ENCODE measurements at regions of chr4 and their contacts with region 1.

Region 1: DNA sequence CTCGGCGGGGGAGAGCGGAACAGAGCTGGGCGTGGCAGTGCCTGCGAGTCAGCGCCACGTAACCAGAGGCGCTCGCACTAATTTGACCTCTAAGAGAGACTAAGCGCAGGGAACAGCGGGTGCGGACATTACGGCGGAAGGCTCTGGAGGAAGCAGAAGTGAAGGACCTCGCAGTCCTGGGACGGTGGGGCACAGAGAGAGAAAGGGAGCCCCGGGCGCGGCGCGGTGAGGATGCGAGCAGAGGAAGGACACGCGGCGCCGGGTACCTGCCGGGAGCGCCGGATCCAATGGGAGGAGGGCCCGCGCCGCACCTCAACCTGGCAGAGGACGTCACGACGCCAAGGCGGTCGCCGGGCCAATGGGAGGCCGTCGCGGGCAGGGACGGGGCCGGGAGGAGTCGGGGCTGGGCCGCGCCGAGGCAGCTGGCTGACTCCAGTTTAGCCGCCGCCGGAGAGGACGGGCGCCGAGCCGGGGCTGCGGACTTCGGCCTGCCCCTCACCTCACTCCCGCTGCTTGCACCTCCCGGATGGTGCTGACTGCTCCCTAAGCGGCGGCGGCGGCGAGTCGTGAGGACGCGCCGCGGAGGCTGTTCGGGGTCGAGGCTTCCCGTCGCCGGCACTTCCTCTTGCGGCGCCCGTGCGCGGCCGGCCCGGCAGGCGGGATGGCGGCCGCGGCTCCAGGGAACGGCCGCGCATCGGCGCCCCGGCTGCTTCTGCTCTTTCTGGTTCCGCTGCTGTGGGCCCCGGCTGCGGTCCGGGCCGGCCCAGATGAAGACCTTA is at the start of gene TMEM165:
- DNase-seq: peak; percentile 51 to 94
- H3K4me3 ChIP-seq: peak within 1 kb of the TSS; percentile 74 to 87 (median 79)
- H3K27ac ChIP-seq: peak within 1 kb of the TSS; percentile 91
- H3K4me1 ChIP-seq: peaks cover 0 to 6% (median under 1%) of the 10 kb centered on the region in 4 experiments; a peak in 2 of 7 replicates
- H3K27me3 ChIP-seq: no peaks in the 10 kb centered on the region
- CTCF ChIP-seq: no peak
- EP300 ChIP-seq: no peak; a peak in 1 of 3 replicates
- POLR2A ChIP-seq: peak; percentile 90 to 99
- RAD21 ChIP-seq: no peak
- total RNA-seq, gene TMEM165: 77.7 and 85.5 TPM in 2 replicates

Region 2: GRCh38 chr4:55363691-55364351 is 31.9 kb before region 1 on chr4:
- CTCF ChIA-PET with region 1: interaction called, 4 read pairs
- POLR2A ChIA-PET with region 1: interaction called, 15 read pairs
- DNase-seq: no peak
- H3K4me3 ChIP-seq: no peak overlapping the region
- H3K27ac ChIP-seq: no peak overlapping the region
- H3K4me1 ChIP-seq: peaks cover 6 to 20% (median 11%) of the 10 kb centered on the region in 4 experiments; a peak in 6 of 7 replicates
- H3K27me3 ChIP-seq: no peaks in the 10 kb centered on the region
- CTCF ChIP-seq: no peak
- EP300 ChIP-seq: no peak
- POLR2A ChIP-seq: no peak
- RAD21 ChIP-seq: no peak

Region 3: GRCh38 chr4:55378617-55379463 is 16.9 kb before region 1 on chr4:
- CTCF ChIA-PET with region 1: no interaction called
- POLR2A ChIA-PET with region 1: interaction called, 16 read pairs
- DNase-seq: no peak
- H3K4me3 ChIP-seq: no peak overlapping the region
- H3K27ac ChIP-seq: no peak overlapping the region
- H3K4me1 ChIP-seq: no peaks in the 10 kb centered on the region
- H3K27me3 ChIP-seq: no peaks in the 10 kb centered on the region
- CTCF ChIP-seq: no peak
- EP300 ChIP-seq: no peak
- POLR2A ChIP-seq: no peak
- RAD21 ChIP-seq: no peak

Region 4: DNA sequence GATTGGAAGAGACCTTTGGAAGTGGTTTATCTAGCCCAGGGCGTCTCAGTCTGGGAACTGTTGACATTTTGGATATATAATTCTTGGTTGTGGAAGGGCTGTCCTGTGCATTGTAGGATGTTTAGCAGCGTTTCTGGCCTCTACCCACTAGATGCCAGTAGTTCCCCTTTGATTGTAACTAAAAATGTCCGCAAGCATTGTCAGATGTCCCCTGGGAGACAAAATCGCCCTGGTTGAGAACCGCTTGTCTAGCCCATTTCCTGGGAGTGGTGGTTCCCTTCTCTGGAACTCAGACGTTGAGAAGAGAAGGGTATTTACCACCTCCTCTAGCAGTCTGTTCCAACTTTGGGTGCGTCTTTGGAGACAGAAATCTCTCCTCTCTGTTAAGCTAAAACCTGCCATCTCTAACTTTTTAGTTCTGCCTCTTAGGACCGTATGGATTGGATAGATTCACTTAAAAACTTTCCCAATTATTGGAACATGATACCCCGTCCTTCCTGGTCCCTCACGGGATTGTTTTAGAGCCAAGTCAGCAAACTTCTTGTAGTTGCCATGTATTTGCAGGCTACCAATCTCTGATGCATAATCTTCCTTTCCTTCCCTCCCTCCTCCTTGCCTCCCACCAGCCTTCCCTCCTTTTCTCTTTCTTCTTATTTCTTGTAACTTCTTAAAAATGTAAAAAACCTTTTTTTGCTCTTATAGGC is 13.9 kb after region 1 on chr4:
- CTCF ChIA-PET with region 1: interaction called, 6 read pairs
- POLR2A ChIA-PET with region 1: interaction called, 19 read pairs
- DNase-seq: no peak
- H3K4me3 ChIP-seq: no peak overlapping the region
- H3K27ac ChIP-seq: no peak overlapping the region
- H3K4me1 ChIP-seq: peaks cover 0 to 3% (median under 1%) of the 10 kb centered on the region in 4 experiments; a peak in 2 of 7 replicates
- H3K27me3 ChIP-seq: no peaks in the 10 kb centered on the region
- CTCF ChIP-seq: peak in 2 of 3 experiments; percentile 39 to 46; a peak in 3 of 4 replicates
- EP300 ChIP-seq: no peak
- POLR2A ChIP-seq: no peak
- RAD21 ChIP-seq: peak; percentile 62 to 75

Measured in H1 (cell line).